ENCODE measurements at regions of chr1 and their contacts with region 1.

Region 1: GRCh38 chr1:162069328-162070093 is at the start of gene NOS1AP:
- DNase-seq: no peak
- ATAC-seq: peak; percentile 94
- H3K4me3 ChIP-seq: peak within 1 kb of the TSS; percentile 84 to 85
- H3K27ac ChIP-seq: peak within 1 kb of the TSS; percentile 95
- H3K4me1 ChIP-seq: peaks cover 45% of the 10 kb centered on the region
- H3K27me3 ChIP-seq: no peaks in the 10 kb centered on the region
- CTCF ChIP-seq: peak; percentile 22; the same call in 1 of the 2 replicates
- total RNA-seq, gene NOS1AP: 27.9 TPM

Region 2: DNA sequence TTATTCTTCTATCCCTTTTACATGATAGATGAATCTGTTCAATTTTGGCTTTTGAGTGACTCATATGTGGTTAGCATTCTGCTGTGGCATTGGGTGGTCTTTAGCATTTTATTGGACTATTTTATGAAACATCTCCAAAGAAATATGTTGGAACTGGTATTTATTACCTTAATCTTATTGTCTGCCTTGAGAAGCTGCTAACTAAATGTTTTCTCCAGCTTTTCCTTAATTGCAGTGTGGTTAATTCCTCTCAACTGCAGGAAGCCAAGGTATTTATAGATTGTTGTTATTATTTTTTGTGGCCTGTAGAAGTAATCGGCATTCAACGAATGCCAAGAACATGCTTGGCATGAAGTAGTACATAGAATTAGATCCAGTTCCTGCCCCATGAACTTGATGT is 64.1 kb after region 1 on chr1:
- CTCF ChIA-PET with region 1: no interaction called
- POLR2A ChIA-PET with region 1: no interaction called
- in situ Hi-C with region 1: no loop called
- intact Hi-C with region 1: loop called (anchors 5 kb)
- DNase-seq: no peak
- ATAC-seq: no peak
- H3K4me3 ChIP-seq: no peak overlapping the region
- H3K27ac ChIP-seq: peak overlapping the region; percentile 99
- H3K4me1 ChIP-seq: peaks cover 100% of the 10 kb centered on the region
- H3K27me3 ChIP-seq: no peaks in the 10 kb centered on the region
- CTCF ChIP-seq: no peak

Region 3: GRCh38 chr1:162276493-162276892 is 207.0 kb after region 1 on chr1:
- CTCF ChIA-PET with region 1: interaction called, 5 read pairs
- POLR2A ChIA-PET with region 1: no interaction called
- in situ Hi-C with region 1: no loop called
- intact Hi-C with region 1: loop called (anchors 1 kb)
- DNase-seq: peak; percentile 10
- ATAC-seq: peak; percentile 74
- H3K4me3 ChIP-seq: no peak overlapping the region
- H3K27ac ChIP-seq: peak overlapping the region; percentile 56; the same call in 1 of the 2 replicates
- H3K4me1 ChIP-seq: peaks cover 33% of the 10 kb centered on the region
- H3K27me3 ChIP-seq: no peaks in the 10 kb centered on the region
- CTCF ChIP-seq: peak; percentile 66